AG04449 (cell line): ENCODE measurements at regions of chr6 and their contacts with region 1.

Region 1: DNA sequence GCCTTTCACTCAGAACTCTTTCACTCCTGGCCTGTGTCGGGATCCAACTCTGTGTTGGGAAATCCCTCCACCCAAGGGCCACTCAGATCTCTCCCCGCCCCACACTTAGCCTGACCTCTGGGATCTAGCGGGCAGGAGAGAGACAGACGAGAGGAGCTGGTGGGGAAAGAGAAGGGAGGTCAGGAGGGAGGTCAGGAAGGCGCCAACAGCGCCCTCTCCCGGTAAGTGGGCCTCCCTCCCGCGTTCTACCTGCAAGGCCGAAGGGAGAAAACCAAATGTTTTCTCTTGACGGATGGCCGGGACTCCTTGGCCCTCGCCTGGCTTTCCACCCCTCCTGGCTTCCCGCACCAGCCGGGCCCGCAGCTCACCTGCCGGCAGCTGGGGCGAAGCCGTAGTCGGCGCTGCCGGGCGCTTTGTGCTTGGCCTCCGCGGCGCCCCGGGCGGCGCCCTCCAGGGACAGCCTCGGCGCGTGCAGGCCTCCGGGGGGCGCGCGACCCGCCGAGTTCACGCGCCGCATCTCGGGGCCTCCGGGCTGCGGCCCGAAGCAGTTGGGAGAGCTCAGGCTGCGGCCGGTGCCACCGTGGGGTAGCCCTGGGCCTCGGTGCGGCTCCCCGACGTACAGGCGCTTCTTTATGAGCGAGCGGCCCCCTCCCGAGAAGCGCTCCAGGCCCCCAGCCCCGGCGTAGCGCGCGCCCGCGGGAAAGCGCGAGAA is 38.2 kb downstream of the C6orf132 start:
- DNase-seq: no peak
- H3K4me3 ChIP-seq: peak overlapping the region; percentile 33
- CTCF ChIP-seq: peak; percentile 79

Region 2: DNA sequence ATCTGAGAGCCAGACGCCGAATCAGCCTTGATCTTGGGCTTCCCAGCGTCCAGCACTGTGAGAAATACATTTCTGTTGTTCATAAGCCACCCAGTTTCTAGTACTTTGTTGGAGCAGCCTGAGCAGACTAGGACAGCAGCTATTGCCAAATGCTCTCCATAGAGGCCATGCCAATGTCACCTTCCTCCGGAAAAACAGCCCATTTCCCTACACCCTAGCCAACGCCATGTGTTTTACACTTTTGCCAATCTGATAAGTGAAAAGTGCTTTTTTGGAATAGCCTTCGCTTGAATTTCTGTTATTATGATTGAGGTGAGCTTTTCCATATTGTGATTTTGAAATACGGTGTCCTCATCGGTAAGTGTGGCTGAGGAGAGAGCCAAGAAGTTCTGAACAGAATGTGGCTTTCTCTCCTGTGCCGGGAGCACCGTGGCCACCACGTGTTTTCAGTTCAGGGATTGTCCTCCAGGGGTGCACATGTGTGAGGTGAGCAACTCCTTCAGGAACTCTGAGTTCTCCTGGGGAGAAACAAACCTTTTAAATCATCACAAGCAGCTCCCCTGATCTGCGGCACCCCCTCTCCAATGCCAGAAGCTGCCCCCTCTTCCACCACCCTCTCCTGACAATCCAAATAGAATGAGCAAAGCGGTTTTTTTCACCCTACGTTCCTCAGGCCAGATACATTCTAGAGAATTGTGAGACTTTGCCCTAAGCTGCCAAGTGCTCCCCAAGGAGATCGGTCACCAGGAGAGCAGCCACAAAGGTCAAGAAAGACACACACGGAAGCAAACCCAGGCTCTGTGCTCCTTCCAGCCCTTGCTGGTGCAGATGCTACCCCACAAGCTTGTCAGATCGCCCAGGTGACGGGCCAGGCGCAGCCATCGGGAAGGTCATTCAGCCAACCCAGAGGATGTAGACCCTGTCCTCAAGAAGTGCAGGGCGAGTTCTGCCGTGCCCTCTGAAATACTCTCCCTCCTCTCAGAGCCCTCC is 17.9 kb before region 1 on chr6:
- CTCF ChIA-PET with region 1: interaction called, 20 read pairs
- POLR2A ChIA-PET with region 1: interaction called, 7 read pairs
- DNase-seq: no peak
- H3K4me3 ChIP-seq: no peak overlapping the region
- CTCF ChIP-seq: peak; percentile 2

Region 3: DNA sequence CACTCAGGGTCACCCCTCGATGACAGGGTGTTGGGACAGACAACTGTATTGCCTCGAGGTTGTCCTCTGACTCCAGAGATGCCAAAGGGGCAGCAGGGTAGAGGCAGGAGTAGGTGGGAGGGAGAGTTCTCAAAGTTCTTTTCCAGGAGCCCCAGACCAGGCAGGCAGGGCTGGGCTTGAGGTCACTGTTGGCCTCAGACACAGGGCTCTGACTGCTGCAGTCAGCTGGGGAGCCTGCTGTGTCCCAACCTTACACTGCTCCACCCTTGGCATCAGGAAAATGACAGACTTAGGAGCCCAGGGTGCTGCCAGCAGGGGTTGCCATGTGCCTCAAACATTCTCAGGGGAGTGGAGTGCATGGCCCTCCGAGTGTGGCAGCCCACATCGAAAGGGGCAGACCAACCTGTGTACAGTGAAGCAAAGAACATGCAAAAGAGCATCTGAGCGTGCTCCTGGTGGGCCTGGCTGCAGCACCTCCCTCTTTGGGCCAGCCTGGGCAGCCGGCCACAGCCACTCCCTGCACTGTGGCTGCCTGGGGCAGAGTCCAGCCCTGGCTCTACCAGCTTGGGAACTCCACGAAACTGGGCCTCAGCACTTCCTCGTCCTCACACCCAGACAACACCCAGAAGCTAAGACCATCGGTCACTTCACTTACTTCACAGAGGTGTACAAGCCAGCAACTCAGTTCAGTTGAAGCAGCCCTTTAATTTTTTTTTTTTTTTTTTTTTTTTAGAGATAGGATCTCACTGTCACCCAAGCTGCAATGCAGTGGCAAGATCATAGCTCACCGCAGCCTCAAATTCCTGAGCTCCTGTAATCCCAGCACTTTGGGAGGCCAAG is 14.1 kb after region 1 on chr6:
- CTCF ChIA-PET with region 1: interaction called, 52 read pairs
- POLR2A ChIA-PET with region 1: no interaction called
- DNase-seq: no peak
- H3K4me3 ChIP-seq: no peak overlapping the region
- CTCF ChIP-seq: no peak

Region 4: DNA sequence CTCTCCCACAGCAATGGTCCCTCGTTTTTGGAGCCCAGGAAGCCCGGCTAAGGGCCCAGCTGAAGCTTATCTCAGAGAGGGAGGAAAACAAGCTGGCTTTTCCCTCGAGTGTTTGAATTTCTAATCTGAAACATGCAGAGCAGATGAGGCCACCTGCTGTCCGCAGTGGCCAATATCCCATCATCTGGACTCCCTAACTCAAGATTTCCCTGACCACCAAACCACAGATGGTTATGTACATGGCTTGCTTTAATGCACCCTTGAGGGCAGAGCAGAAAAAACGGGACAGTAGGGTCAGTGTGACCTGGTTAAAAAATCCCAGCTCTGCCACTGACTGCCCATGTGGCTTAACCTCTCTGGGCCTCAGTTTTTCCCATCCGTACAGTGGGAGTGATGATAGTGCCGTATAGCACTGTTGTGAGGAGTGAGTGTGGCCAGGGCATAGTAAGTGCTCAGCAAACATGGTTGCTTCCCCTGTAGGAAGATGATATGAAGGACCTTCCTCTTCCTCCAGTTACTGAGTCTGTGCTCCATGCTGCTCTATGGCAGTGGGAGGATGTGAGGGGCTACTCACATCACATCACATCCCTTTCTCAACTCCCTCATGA is 24.9 kb after region 1 on chr6:
- CTCF ChIA-PET with region 1: interaction called, 13 read pairs
- POLR2A ChIA-PET with region 1: no interaction called
- DNase-seq: no peak
- H3K4me3 ChIP-seq: no peak overlapping the region
- CTCF ChIP-seq: no peak

Region 5: GRCh38 chr6:42136508-42137193 is 32.4 kb after region 1 on chr6:
- CTCF ChIA-PET with region 1: interaction called, 14 read pairs
- POLR2A ChIA-PET with region 1: no interaction called
- DNase-seq: no peak
- H3K4me3 ChIP-seq: no peak overlapping the region
- CTCF ChIP-seq: peak; percentile 56